ENCODE measurements at regions of chr9 and their contacts with region 1.

Region 1: GRCh38 chr9:129995409-129996160 is 47.4 kb downstream of the FNBP1 start:
- DNase-seq: peak; percentile 48
- H3K4me3 ChIP-seq: peak overlapping the region; percentile 47
- H3K27ac ChIP-seq: peak overlapping the region; percentile 96
- H3K4me1 ChIP-seq: peaks cover 94% of the 10 kb centered on the region
- CTCF ChIP-seq: no peak

Region 2: DNA sequence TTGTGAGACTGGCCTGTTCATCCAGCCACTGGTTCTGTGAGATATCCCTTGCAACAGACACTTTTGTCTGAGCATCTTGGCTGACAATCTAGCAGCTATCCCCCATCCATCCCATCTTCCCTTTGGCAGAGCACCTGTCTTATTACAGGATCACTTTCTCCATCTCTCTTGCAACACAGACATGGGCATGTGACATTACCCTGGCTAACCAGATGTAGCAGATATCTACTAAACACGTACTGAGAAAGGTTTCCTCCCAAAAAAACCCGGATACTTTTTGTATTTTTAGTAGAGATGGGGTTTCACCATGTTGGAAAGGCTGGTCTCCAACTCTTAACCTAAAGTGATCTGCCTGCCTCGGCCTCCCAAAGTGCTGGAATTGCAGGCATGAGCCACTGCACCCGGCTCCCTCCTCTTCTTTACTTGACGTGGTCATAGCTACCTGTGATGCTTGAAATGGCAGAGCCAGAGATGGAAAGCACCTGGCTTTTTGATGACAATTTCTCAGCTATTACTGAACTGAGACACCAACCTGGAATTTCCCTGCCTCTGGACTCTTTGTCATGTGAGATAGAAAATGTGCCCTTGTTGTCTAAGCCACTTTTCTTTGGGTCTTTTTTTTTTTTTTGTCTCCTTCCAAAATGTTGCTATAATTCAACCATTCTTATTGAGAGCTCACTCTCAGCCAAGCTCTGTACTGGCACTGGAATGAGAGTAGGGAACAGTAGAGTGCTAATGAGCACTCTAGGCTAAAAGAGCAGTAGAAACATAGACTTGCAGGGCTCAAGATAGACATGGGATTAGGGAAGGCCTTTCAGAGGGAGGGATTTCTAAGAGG is 14.8 kb after region 1 on chr9:
- CTCF ChIA-PET with region 1: no interaction called
- POLR2A ChIA-PET with region 1: interaction called, 42 read pairs
- intact Hi-C with region 1: no loop called
- DNase-seq: no peak
- H3K4me3 ChIP-seq: no peak overlapping the region
- H3K27ac ChIP-seq: peak overlapping the region; percentile 54
- H3K4me1 ChIP-seq: peaks cover 56% of the 10 kb centered on the region
- CTCF ChIP-seq: no peak

Region 3: DNA sequence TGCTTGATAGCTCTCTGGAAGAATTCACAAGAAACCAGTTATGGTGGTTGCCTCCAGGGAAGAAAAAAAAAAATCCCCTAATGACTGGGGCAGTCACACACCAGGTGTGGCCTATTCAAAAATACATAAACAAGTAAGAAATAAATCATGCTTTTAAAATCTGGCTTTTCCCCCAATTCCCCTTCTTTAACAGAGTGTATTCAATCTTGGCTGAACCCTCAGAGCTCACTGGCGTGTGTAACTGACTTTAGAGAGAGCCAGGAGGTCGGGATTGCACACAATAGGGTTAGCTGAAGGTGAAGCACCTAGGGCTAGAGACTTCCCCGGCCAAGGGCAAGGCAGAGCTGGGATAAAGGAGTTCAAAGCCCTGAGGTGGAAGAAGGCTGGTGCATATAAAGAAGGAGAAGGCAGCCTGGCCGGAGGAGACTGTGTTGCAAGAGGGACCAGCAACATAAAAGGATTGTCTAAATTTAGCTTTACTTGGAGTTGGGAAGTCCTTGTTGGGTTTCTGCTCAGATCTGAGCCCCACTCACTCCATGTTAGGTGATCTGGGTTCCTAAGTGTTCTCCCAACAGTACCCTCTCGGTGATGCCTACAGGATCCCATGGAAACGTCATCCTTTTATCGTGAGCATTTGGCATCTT is 27.7 kb after region 1 on chr9:
- CTCF ChIA-PET with region 1: no interaction called
- POLR2A ChIA-PET with region 1: interaction called, 11 read pairs
- intact Hi-C with region 1: no loop called
- DNase-seq: peak; percentile 55
- H3K4me3 ChIP-seq: peak overlapping the region; percentile 10
- H3K27ac ChIP-seq: peak overlapping the region; percentile 70
- H3K4me1 ChIP-seq: peaks cover 98% of the 10 kb centered on the region
- CTCF ChIP-seq: no peak

Region 4: GRCh38 chr9:130088051-130088450 is 92.5 kb after region 1 on chr9:
- CTCF ChIA-PET with region 1: no interaction called
- POLR2A ChIA-PET with region 1: no interaction called
- intact Hi-C with region 1: no loop called
- DNase-seq: no peak
- H3K4me3 ChIP-seq: no peak overlapping the region
- H3K27ac ChIP-seq: no peak overlapping the region
- H3K4me1 ChIP-seq: no peaks in the 10 kb centered on the region
- CTCF ChIP-seq: no peak

Region 5: GRCh38 chr9:130805510-130806326 is 810.1 kb after region 1 on chr9:
- CTCF ChIA-PET with region 1: no interaction called
- POLR2A ChIA-PET with region 1: no interaction called
- intact Hi-C with region 1: no loop called
- DNase-seq: peak; percentile 12
- H3K4me3 ChIP-seq: no peak overlapping the region
- H3K27ac ChIP-seq: peak overlapping the region; percentile 19
- H3K4me1 ChIP-seq: peaks cover 15% of the 10 kb centered on the region
- CTCF ChIP-seq: no peak

Measured in OCI-LY7 (cell line).